OCI-LY7 (cell line): ENCODE measurements at regions of chr1 and their contacts with region 1.

Region 1: DNA sequence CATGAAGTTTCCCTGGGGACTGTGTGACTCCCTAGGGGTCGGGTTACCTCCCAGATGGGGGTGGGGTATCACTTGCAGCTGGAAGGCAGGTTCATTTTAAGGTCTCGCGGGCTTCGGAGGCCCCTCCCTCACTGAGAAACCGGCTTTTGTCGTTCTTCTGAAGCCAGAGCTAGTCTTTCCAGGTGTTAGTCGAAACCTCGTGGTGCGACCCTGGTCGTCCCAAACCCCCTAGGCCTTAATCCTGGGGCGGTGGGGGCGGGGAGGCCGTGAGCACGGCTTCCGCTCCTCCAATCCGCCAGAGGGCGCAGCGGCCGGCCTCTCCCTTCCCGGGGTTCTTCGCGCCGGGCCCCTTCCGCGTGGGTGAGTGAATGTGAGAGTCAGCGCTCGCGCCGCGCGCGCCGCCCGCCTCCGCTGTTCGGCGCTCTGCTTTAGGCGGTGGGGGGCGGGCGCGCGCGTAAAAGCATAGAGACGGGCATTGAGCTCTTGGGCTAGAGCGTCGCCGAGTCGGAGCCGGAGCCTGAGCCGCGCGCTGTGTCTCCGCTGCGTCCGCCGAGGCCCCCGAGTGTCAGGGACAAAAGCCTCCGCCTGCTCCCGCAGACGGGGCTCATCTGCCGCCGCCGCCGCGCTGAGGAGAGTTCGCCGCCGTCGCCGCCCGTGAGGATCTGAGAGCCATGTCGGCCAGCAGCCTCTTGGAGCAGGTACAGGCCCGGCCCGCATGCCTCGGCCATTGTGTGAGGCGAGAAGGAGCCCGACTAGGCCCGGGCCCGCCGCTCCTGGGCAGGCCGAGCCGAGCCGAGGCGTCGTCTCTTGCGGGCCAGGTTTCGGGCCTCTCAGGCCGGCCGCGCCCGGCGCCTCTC is at the start of gene YTHDF2:
- DNase-seq: peak; percentile 99
- H3K4me3 ChIP-seq: peak within 1 kb of the TSS; percentile 88
- H3K27ac ChIP-seq: peak within 1 kb of the TSS; percentile 78
- H3K4me1 ChIP-seq: peaks cover 31% of the 10 kb centered on the region
- CTCF ChIP-seq: peak; percentile 91
- total RNA-seq, gene YTHDF2: 46.6 and 57.9 TPM in 2 replicates

Region 2: DNA sequence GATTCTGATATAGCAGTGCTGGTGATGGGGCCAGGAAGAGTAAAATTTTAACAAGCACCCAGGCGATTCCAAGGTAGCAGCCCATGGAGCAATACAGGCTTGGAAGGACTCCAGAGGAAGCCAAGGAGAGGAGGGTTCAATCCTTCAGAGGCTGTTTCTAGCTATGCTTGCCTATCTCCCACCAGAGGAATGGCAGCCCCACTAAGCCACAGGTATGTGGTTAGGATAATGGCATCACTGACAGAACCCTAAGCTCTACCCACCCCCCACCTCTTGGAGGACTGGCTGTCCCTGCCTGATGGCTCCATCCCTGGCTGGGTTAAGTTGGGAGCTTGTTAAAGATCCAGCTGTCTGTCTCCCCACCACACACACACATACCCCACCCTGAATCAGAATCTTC is 540.9 kb before region 1 on chr1:
- CTCF ChIA-PET with region 1: interaction called, 12 read pairs
- POLR2A ChIA-PET with region 1: no interaction called
- intact Hi-C with region 1: no loop called
- DNase-seq: no peak
- H3K4me3 ChIP-seq: no peak overlapping the region
- H3K27ac ChIP-seq: no peak overlapping the region
- H3K4me1 ChIP-seq: peaks cover 20% of the 10 kb centered on the region
- CTCF ChIP-seq: no peak

Region 3: DNA sequence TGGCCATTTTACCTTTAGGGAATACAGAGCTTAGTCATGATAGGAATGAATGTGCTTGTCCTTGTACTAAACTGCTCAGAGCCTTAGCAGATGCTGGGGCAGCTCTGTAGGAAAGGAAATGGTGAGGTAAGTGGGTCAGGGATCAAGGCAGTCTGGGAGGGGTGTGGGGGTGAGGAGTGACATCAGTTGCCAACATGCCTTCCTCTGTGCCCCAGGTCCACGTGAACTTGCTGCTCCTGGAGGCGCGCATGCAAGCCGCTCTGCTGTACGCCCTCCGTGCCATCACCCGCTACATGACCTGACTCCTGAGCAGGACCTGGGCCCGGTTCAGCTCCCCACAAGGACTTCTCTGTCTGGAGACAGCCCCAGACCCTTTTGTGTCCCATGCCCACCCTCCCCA is 456.2 kb before region 1 on chr1:
- CTCF ChIA-PET with region 1: no interaction called
- POLR2A ChIA-PET with region 1: no interaction called
- intact Hi-C with region 1: no loop called
- DNase-seq: no peak
- H3K4me3 ChIP-seq: no peak overlapping the region
- H3K27ac ChIP-seq: no peak overlapping the region
- H3K4me1 ChIP-seq: no peaks in the 10 kb centered on the region
- CTCF ChIP-seq: no peak

Region 4: GRCh38 chr1:28648474-28649198 is 88.0 kb before region 1 on chr1 and contains the start of gene RNU11:
- CTCF ChIA-PET with region 1: interaction called, 10 read pairs
- POLR2A ChIA-PET with region 1: interaction called, 9 read pairs
- intact Hi-C with region 1: loop called (anchors 1 kb)
- DNase-seq: peak; percentile 98
- H3K4me3 ChIP-seq: peak within 1 kb of the TSS; percentile 69
- H3K27ac ChIP-seq: peak within 1 kb of the TSS; percentile 99
- H3K4me1 ChIP-seq: peaks cover 35% of the 10 kb centered on the region
- CTCF ChIP-seq: no peak
- total RNA-seq, gene RNU11: not detected in 2 replicates

Region 5: GRCh38 chr1:28668191-28668955 is 68.3 kb before region 1 on chr1 and contains the start of gene GMEB1:
- CTCF ChIA-PET with region 1: no interaction called
- POLR2A ChIA-PET with region 1: interaction called, 7 read pairs
- intact Hi-C with region 1: loop called (anchors 1 kb)
- DNase-seq: peak; percentile 93
- H3K4me3 ChIP-seq: peak within 1 kb of the TSS; percentile 87
- H3K27ac ChIP-seq: peak within 1 kb of the TSS; percentile 93
- H3K4me1 ChIP-seq: peaks cover 13% of the 10 kb centered on the region
- CTCF ChIP-seq: no peak
- total RNA-seq, gene GMEB1: 12.5 and 13.0 TPM in 2 replicates